GM10248 (cell line): ENCODE measurements at regions of chr4 and their contacts with region 1.

Region 1: DNA sequence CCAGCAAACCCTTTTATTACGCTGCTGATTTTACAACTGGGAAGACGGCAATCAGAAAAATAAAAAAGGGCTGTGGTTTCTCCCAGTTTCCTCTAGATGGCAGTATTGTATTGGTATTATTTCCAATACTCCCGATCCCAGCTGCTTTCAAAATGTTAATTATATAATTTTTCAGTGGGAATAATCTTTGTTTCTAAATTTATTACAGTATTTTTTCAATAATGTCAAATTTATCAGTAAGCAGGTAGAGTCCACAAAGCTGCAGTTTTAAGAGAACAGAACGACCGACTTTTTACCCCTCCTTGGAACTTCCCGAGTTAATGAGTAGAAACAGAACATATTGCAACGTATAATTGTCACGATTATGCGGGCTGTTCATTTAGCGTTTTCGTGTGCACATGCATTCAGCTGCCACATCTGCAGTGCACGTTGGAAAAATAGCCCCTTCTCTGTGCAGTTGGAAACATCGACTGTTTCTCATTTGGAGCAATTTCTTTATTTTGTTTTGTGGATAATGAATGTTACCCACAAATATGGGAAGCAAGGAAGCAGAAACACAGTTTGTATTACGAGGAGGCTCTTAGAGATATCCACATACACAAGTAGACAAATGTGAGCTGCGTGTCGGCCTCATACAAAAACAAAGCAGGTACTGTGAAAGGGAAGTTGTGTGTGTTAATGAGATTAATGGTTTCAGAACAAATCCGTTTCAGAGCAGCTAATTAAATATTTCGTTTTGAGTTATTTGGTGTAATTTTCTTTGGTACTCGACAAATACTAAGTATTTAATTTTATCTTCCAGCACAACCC is 188.0 kb downstream of the STIM2 start:
- DNase-seq: peak; percentile 47
- CTCF ChIP-seq: peak; percentile 48

Region 2: DNA sequence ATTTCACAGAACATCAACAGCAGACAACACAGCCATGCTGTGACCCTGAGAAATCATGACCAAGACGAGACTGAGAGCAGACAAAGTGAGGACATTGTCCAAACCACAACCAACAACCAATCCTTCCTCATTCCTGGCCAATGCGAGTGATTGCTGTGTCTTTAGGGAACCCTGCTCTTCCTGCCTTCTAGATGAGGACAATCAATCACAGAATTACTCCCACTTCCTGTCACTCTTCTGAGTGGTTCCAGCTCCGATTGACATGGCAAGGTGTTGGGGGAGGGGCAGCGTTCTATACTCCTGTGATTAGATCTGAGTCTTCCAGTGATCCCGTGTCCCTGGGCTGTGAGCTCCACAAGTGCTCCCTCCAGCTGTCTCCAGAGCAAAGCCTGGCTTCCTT is 39.9 kb after region 1 on chr4:
- CTCF ChIA-PET with region 1: no interaction called
- POLR2A ChIA-PET with region 1: no interaction called
- DNase-seq: no peak
- CTCF ChIP-seq: no peak

Region 3: GRCh38 chr4:27161191-27161590 is 112.6 kb after region 1 on chr4:
- CTCF ChIA-PET with region 1: no interaction called
- POLR2A ChIA-PET with region 1: no interaction called
- DNase-seq: no peak
- CTCF ChIP-seq: no peak

Region 4: DNA sequence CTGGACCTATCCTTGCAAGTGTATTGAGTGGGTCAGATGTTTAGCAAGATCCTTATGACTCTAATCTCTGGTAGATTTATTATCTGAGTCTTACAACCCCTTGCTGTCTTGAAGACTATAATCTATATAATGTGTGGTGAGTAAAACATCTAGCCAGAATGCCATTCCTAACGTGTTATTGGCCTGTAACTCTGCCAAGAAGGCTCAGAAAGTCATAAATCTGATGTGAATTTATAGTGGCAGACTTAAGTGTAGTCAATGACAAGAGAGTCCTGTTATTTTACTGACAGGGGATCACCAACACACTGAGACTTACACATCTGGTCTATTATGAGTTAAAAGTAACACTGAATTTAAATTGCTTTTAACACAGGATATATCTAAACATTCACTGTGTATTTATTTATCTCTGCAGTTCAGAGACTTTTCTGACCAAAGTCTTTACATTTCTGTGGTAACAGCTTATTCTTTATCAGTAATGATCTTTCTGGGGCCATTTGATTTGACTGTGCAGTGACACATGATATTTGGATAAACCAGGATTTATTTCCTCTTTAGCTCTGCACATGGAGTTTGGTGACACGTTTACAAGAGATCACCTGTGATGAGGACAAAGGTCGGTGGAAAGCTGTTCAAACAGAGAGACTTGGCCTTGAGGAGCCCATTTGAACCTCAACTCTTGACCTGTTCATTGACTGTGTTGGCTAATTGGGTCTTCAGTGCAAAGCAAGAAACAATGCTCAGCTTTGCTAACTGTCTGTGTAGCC is 227.9 kb after region 1 on chr4:
- CTCF ChIA-PET with region 1: no interaction called
- POLR2A ChIA-PET with region 1: no interaction called
- DNase-seq: no peak
- CTCF ChIP-seq: no peak

Region 5: GRCh38 chr4:27318743-27319142 is 270.1 kb after region 1 on chr4:
- CTCF ChIA-PET with region 1: interaction called, 27 read pairs
- POLR2A ChIA-PET with region 1: no interaction called
- DNase-seq: peak; percentile 7
- CTCF ChIP-seq: peak; percentile 19